ENCODE measurements at regions of chr7 and their contacts with region 1.

Region 1: GRCh38 chr7:98240961-98241674 is 10.9 kb downstream of the TECPR1 start:
- DNase-seq: peak in 7 of 10 donors; percentile 24 to 65 (median 50)
- H3K4me3 ChIP-seq: no peak overlapping the region
- H3K27ac ChIP-seq: peak overlapping the region in 1 of 59 donors; percentile 15
- H3K27me3 ChIP-seq: no peaks in the 10 kb centered on the region
- CTCF ChIP-seq: peak; percentile 34 to 82 (median 72)

Region 2: DNA sequence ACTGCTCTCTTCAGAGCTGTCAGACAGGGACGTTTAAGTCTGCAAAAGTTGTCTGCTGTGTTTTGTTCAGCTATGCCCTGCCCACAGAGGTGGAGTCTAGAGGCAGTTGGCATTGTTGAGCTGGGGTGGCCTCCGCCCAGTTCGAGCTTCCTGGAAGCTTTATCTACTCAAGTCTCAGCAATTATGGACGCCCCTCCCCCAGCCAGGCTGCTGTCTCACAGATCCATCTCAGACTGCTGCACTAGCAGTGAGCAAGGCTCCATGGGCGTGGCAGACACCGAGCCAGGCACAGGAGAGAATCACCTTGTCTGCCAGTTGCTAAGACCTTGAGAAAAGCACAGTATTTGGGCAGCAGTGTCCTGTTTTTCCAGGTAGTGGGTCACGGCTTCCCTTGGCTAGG is 1025.6 kb before region 1 on chr7:
- intact Hi-C with region 1: no loop called
- DNase-seq: no peak
- H3K4me3 ChIP-seq: no peak overlapping the region
- H3K27ac ChIP-seq: no peak overlapping the region
- H3K27me3 ChIP-seq: no peaks in the 10 kb centered on the region
- CTCF ChIP-seq: no peak

Region 3: GRCh38 chr7:98021588-98022351 is 219.3 kb before region 1 on chr7:
- intact Hi-C with region 1: loop called in 1 of 2 experiments (anchors 10 kb)
- DNase-seq: peak; percentile 77 to 89 (median 87)
- H3K4me3 ChIP-seq: no peak overlapping the region
- H3K27ac ChIP-seq: no peak overlapping the region
- H3K27me3 ChIP-seq: peaks cover 0 to 4% (median 0%) of the 10 kb centered on the region in 45 donors
- CTCF ChIP-seq: peak; percentile 92 to 100 (median 97)

Region 4: GRCh38 chr7:98178347-98178746 is 62.8 kb before region 1 on chr7:
- intact Hi-C with region 1: loop called in 1 of 2 experiments (anchors 10 kb)
- DNase-seq: peak; percentile 56 to 84 (median 80)
- H3K4me3 ChIP-seq: peak overlapping the region in 38 of 59 donors; percentile 0 to 50 (median 24)
- H3K27ac ChIP-seq: peak overlapping the region in 54 of 59 donors; percentile 4 to 83 (median 56)
- H3K27me3 ChIP-seq: no peaks in the 10 kb centered on the region
- CTCF ChIP-seq: peak in 1 of 56 donors; percentile 24

Region 5: DNA sequence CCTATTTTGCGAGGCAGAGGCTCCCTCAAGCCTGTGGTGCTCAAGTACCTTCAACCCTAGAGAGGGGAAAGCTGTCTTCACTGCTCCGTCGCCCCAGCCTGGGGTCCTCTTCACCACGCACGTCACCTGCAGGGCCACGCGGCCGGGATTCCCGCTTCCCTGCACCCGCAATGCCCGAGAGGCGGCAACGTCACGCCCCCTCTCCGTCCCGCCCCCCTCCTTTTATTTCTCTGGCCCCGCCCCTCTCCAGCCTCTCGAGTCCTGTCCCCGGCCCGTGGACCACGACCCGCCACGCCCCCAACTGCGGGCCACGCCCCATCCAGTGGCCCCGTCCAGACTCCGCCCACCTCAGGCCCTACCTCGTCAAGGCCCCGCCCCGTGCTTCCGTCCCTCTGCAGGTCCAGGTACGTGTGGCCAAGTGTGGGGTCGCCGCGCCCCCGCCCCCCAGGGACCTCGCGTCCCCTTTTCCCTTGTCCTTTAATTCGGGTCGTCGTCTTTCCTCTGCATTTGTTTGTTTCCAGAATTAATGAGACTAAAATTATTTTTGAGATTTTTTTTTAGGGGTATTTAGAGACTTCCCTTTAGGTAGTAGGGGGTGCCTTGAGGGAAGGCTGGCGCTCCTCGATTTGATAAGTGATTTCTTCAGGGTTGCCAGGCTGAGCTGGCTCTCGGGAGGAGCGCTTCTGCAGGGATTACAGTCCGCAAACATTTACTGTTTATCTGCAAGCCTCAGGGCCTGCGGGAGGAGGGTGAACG is 229.5 kb after region 1 on chr7:
- intact Hi-C with region 1: no loop called
- DNase-seq: no peak
- H3K4me3 ChIP-seq: peak overlapping the region in 44 of 59 donors; percentile 1 to 53 (median 35)
- H3K27ac ChIP-seq: no peak overlapping the region
- H3K27me3 ChIP-seq: peaks cover 0 to 52% (median 14%) of the 10 kb centered on the region in 45 donors
- CTCF ChIP-seq: no peak